ENCODE measurements at regions of chr22 and their contacts with region 1.

Region 1: DNA sequence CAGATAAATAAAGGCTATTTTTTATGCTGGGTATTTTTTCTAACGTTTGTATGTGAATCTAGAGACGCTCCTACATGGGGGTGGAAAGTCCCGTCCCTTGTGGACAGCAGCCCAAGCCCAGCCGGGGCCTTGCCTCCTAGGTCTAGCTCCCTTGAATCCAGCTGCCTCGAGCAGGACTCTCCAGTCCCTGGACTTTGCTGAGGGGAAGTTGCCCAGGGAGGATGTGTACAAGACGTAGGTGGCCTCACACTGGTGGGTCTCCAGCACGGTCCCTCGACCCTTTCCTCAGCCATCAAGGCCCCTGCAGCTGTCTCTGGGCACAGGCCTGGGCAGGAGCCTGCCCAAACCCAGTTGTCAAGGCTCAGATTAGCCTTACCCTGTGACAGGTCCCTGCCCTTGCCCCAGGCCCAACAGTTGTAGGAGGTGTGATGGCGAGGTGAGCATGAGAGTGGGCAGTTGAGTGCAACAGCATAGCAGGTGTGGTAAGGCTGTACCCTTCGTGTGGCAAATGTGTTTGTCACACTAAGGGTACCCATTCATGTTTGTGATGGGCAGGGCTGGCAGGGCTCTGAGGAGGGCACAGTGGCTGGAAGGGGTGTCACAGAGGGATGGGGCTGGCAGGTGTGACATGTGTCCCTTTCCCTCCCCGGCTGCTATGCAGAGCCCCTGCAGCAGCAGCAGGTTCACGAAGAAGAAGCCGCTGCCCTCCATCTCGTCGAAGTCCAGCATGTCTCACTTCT is 3.4 kb downstream of the CCDC116 start:
- DNase-seq: no peak
- H3K4me3 ChIP-seq: no peak overlapping the region
- H3K27ac ChIP-seq: no peak overlapping the region
- H3K4me1 ChIP-seq: no peaks in the 10 kb centered on the region
- H3K27me3 ChIP-seq: no peaks in the 10 kb centered on the region
- CTCF ChIP-seq: no peak
- POLR2A ChIP-seq: no peak

Region 2: GRCh38 chr22:21579518-21580147 is 56.3 kb before region 1 on chr22:
- CTCF ChIA-PET with region 1: interaction called, 3 read pairs
- POLR2A ChIA-PET with region 1: interaction called, 12 read pairs
- dilution Hi-C with region 1: no loop called
- intact Hi-C with region 1: no loop called
- DNase-seq: no peak
- H3K4me3 ChIP-seq: no peak overlapping the region
- H3K27ac ChIP-seq: no peak overlapping the region
- H3K4me1 ChIP-seq: peaks cover 2% of the 10 kb centered on the region
- H3K27me3 ChIP-seq: no peaks in the 10 kb centered on the region
- CTCF ChIP-seq: no peak
- POLR2A ChIP-seq: no peak

Region 3: DNA sequence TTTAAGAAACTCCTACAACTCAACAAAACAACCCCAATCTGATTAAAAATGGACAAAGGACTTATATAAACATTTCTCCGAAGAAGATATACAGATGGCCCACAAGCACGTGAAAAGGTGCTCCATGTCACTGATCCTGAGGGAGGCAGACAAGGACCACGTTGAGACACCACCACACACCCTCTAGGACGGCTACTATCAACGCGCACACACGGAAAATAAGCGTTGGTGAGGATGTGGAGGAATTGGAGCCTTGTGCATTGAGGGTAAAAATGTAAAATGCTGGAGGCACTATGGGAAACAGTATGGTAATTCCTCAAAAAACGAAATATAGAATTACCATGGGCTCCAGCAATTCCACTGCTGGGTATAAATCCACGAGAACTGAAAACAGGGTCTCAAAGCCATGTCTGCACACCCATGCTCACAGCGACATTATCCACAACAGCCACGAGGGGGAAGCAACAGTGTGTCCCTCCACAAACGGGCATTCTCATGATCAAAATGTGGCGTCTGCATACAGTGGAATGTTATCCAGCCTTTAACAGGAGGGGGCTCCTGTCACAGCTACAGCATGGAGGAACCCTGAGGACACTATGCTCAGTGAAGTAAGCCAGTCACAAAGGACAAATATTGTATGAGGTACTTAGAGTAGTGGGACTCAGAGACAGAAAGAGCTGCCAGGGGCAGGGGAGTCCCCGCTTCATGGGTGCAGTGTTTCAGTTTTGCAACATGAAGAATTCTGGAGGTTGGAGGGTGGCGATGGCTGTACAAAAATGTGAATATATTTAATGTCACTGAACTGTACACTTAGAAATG is 77.2 kb after region 1 on chr22:
- CTCF ChIA-PET with region 1: no interaction called
- POLR2A ChIA-PET with region 1: no interaction called
- dilution Hi-C with region 1: no loop called
- intact Hi-C with region 1: no loop called
- DNase-seq: peak; percentile 85
- H3K4me3 ChIP-seq: peak overlapping the region in 1 of 3 experiments; percentile 4
- H3K27ac ChIP-seq: no peak overlapping the region
- H3K4me1 ChIP-seq: peaks cover 3% of the 10 kb centered on the region
- H3K27me3 ChIP-seq: no peaks in the 10 kb centered on the region
- CTCF ChIP-seq: peak; percentile 66 to 77
- POLR2A ChIP-seq: no peak